ENCODE measurements at regions of chr10 and their contacts with region 1.

Region 1: DNA sequence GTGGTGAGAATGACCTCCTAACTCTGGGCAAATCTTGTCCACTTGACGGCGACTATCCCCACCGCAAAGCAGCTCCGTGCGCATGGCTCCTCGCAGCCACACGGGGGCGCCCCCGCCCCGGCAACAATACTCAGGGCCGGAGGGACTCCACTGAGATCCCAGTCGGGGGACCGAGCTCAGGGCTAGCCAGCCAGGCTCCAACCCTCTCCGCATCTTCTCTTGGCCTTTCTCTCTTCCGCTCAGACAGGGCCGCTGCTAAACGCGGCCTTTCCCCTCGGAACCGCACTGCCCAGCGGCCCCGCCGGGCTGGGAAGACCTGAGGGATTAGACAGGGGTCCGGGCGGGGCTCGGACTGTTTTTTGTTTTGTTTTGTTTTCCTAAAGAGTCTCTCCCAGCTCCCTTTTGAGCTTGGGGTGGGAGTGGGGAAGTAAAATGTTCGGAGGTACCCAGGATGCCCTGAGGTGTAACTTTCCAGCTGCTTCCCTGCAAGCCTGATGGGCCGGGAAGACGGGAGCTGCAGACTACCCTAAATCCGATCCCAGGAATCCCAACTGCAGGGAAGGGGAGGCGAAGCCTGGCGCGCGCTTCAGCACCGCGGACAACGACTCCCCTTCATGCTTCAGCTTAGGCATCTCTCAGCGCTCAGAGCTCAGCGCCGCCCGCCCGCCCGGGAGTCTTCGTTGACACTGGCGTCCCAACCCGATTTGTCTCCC is 2.7 kb downstream of the KCNIP2 start:
- DNase-seq: peak; percentile 84
- H3K4me3 ChIP-seq: peak overlapping the region; percentile 2 to 33
- H3K27ac ChIP-seq: no peak overlapping the region
- H3K4me1 ChIP-seq: peaks cover 20% of the 10 kb centered on the region
- H3K27me3 ChIP-seq: no peaks in the 10 kb centered on the region
- CTCF ChIP-seq: peak; percentile 77 to 87 (median 85)
- POLR2A ChIP-seq: no peak

Region 2: DNA sequence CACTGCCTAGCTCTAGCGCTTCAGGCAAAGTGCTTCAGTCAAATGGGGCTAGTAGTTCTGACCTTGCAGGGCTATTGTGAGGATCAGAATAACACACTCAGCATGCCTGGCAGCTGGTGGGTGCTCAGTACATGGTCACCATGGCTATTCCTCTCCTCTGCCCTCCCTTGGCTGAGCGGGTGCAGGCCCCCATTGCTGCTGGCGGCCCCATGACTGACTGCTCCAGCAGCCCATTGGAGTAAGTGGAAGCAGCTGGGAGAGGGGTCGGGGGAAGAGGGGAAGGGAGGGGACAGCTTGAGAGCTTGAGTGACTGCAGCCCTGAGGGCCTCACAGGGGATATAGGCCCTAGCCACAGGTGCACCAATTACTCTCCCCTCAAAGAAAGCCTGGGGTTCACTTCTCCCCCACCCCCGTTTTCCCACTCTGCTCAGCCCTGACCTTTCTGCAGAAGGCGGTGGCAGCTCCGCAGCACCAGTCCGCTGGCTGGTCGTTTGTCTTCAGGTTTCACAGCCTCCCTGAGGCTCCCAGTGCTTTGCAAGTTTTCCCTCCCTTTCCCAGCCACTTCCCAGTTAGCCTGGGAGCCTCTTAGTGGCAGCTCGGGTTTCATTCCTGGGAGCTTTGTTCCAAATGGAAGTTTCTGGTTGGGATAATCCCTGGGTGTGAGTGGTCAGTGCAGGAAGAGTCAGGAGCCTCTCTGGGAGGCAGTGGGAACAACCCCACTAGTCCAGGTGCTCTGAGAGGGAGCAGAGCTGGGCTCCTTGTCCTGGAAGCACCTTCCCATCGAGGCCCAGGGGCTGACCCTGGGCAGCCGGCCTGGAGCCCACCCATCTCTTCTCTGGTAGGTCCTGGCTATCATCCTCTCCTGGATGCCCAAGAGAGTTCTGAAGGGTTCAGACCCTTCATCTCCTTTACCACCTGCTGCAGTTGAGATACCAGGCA is 81.3 kb before region 1 on chr10:
- intact Hi-C with region 1: no loop called
- DNase-seq: no peak
- H3K4me3 ChIP-seq: no peak overlapping the region
- H3K27ac ChIP-seq: no peak overlapping the region
- H3K4me1 ChIP-seq: no peaks in the 10 kb centered on the region
- H3K27me3 ChIP-seq: no peaks in the 10 kb centered on the region
- CTCF ChIP-seq: no peak
- POLR2A ChIP-seq: no peak

Region 3: GRCh38 chr10:102009801-102010425 is 169.0 kb after region 1 on chr10:
- intact Hi-C with region 1: loop called (anchors 10 kb)
- DNase-seq: peak; percentile 70
- H3K4me3 ChIP-seq: no peak overlapping the region
- H3K27ac ChIP-seq: no peak overlapping the region
- H3K4me1 ChIP-seq: no peaks in the 10 kb centered on the region
- H3K27me3 ChIP-seq: no peaks in the 10 kb centered on the region
- CTCF ChIP-seq: peak; percentile 79 to 84 (median 82)
- POLR2A ChIP-seq: no peak